Activated CD4-positive, alpha-beta memory T cell treated with anti-CD3 and anti-CD28 coated beads for 36 hours (primary cell): ENCODE measurements at regions of chr17 and their contacts with region 1.

Region 1: DNA sequence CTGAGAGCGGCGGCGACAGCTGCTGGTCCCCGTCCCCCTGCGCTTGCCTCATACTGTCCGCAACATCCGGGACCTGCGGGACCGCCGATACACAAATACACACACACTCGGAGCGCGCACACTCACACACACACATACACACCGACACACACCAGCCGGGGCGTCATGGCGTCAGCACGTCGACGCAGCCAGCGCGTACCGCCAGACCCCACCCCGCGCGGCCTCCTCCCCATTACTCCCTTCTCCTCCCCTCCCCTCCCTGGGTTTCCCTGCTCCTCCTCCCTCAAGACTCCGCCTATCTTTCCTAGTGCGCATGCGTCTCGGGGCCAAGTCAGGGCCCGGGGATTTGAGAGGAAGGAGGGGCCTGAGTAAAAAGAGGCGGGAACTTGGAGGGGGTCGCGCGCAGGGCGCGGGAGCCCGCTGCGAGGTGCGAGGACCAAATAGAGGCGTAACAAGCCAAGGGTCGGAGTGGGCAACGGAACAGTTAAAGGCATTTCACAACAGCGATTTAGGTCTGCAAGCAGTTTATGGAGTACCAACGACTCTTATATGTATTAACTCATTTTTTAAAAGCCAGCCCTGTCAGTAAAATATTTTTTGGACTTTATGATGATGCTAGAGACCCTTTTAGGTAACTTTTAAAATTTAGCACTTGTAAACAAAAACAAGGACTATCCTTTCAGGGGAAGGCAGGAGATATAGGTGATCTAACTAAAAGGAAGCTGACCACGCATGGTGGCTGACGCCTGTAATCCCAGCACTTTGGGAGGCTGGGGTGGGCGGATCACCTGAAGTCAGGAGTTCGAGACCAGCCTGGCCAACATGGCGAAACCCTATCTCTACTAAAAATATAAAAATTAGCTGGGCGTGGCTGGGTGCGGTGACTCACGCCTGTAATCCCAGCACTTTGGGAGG is at the start of gene SPOP:
- DNase-seq: peak; percentile 100
- H3K4me3 Mint-ChIP-seq: peak within 1 kb of the TSS; percentile 95
- H3K27ac Mint-ChIP-seq: peak within 1 kb of the TSS; percentile 99
- H3K4me1 Mint-ChIP-seq: peaks cover 37% of the 10 kb centered on the region
- H3K27me3 Mint-ChIP-seq: peaks cover 4% of the 10 kb centered on the region
- total RNA-seq, gene SPOP: 53.4 to 60.0 TPM

Region 2: DNA sequence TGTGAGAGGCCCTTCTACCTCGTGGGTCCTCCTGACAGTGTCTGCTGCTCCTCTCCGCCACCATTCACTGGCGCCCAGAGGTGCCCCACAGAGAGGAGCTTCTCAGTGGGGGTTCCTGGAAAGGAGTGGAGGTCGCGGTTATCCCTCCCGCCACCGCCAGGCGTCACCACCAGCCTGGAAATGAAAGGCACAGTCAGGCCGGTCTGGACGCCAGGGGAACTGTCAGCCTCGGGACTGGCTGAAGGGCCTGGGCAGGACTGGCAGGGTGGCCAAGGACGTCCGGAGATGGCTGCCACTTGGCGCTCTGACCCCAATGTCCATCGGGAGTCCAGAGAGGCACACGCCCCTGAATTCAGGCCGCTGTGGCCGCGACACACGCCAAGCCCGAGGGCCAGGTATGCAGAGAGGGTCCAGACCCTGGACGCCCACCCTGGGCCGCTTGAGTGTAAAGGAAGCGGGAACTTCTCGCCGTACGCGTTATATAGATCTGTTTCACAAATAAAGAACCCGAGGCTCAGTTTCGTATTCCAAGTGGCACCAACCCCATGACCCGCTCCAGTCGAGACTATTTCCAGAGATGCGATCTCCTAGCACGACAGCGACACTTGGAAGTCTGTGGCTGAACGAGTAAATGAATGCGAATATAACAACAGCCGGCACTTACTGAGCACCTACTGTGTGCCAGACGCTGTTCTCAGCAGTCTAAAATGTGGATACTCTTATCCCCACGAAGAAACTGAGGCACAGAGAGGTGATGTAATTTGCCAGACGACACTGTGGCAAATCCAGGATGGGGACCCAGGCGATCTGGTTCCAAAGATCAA is 110.1 kb before region 1 on chr17:
- CTCF ChIA-PET with region 1: interaction called, 9 read pairs
- POLR2A ChIA-PET with region 1: no interaction called
- intact Hi-C with region 1: loop called (anchors 1 kb)
- DNase-seq: peak; percentile 90
- H3K4me3 Mint-ChIP-seq: peak overlapping the region; percentile 67
- H3K27ac Mint-ChIP-seq: no peak overlapping the region
- H3K4me1 Mint-ChIP-seq: peaks cover 16% of the 10 kb centered on the region
- H3K27me3 Mint-ChIP-seq: peaks cover 14% of the 10 kb centered on the region

Region 3: GRCh38 chr17:49646391-49647255 is 31.6 kb before region 1 on chr17:
- CTCF ChIA-PET with region 1: no interaction called
- POLR2A ChIA-PET with region 1: interaction called, 5 read pairs
- intact Hi-C with region 1: loop called (anchors 1 kb)
- DNase-seq: peak; percentile 76
- H3K4me3 Mint-ChIP-seq: peak overlapping the region; percentile 37
- H3K27ac Mint-ChIP-seq: peak overlapping the region; percentile 73
- H3K4me1 Mint-ChIP-seq: peaks cover 59% of the 10 kb centered on the region
- H3K27me3 Mint-ChIP-seq: no peaks in the 10 kb centered on the region

Region 4: GRCh38 chr17:49707608-49708514 is 29.7 kb after region 1 on chr17 and contains the start of gene SLC35B1:
- CTCF ChIA-PET with region 1: interaction called, 11 read pairs
- POLR2A ChIA-PET with region 1: interaction called, 3 read pairs
- intact Hi-C with region 1: loop called (anchors 1 kb)
- DNase-seq: peak; percentile 99
- H3K4me3 Mint-ChIP-seq: peak within 1 kb of the TSS; percentile 91
- H3K27ac Mint-ChIP-seq: peak within 1 kb of the TSS; percentile 98
- H3K4me1 Mint-ChIP-seq: peaks cover 42% of the 10 kb centered on the region
- H3K27me3 Mint-ChIP-seq: no peaks in the 10 kb centered on the region
- total RNA-seq, gene SLC35B1: 48.3 to 54.1 TPM

Region 5: GRCh38 chr17:49763735-49764558 is 85.8 kb after region 1 on chr17 and contains the start of gene FAM117A:
- CTCF ChIA-PET with region 1: no interaction called
- POLR2A ChIA-PET with region 1: interaction called, 3 read pairs
- intact Hi-C with region 1: loop called (anchors 1 kb)
- DNase-seq: peak; percentile 99
- H3K4me3 Mint-ChIP-seq: peak within 1 kb of the TSS; percentile 90
- H3K27ac Mint-ChIP-seq: peak within 1 kb of the TSS; percentile 81
- H3K4me1 Mint-ChIP-seq: peaks cover 54% of the 10 kb centered on the region
- H3K27me3 Mint-ChIP-seq: no peaks in the 10 kb centered on the region
- total RNA-seq, gene FAM117A: 20.9 to 21.6 TPM

Region 6: GRCh38 chr17:50719144-50719923 is 1041.1 kb after region 1 on chr17 and contains the start of gene LUC7L3:
- CTCF ChIA-PET with region 1: no interaction called
- POLR2A ChIA-PET with region 1: no interaction called
- intact Hi-C with region 1: loop called (anchors 5 kb)
- DNase-seq: peak; percentile 96
- H3K4me3 Mint-ChIP-seq: peak within 1 kb of the TSS; percentile 97
- H3K27ac Mint-ChIP-seq: peak within 1 kb of the TSS; percentile 98
- H3K4me1 Mint-ChIP-seq: peaks cover 26% of the 10 kb centered on the region
- H3K27me3 Mint-ChIP-seq: no peaks in the 10 kb centered on the region
- total RNA-seq, gene LUC7L3: 120 to 137 TPM